MCF 10A (cell line): ENCODE measurements at regions of chr1 and their contacts with region 1.

Region 1: GRCh38 chr1:242467556-242468145 is 56.8 kb downstream of the PLD5 start:
- DNase-seq: peak; percentile 88
- H3K4me3 Mint-ChIP-seq: no peak overlapping the region
- H3K27ac Mint-ChIP-seq: no peak overlapping the region
- H3K4me1 Mint-ChIP-seq: peaks cover 6% of the 10 kb centered on the region
- H3K27me3 Mint-ChIP-seq: no peaks in the 10 kb centered on the region
- CTCF ChIP-seq: peak; percentile 97

Region 2: GRCh38 chr1:242228991-242229390 is 238.7 kb before region 1 on chr1:
- CTCF ChIA-PET with region 1: no interaction called
- POLR2A ChIA-PET with region 1: no interaction called
- intact Hi-C with region 1: no loop called
- DNase-seq: peak; percentile 72
- H3K4me3 Mint-ChIP-seq: no peak overlapping the region
- H3K27ac Mint-ChIP-seq: peak overlapping the region; percentile 36
- H3K4me1 Mint-ChIP-seq: peaks cover 28% of the 10 kb centered on the region
- H3K27me3 Mint-ChIP-seq: no peaks in the 10 kb centered on the region
- CTCF ChIP-seq: no peak

Region 3: DNA sequence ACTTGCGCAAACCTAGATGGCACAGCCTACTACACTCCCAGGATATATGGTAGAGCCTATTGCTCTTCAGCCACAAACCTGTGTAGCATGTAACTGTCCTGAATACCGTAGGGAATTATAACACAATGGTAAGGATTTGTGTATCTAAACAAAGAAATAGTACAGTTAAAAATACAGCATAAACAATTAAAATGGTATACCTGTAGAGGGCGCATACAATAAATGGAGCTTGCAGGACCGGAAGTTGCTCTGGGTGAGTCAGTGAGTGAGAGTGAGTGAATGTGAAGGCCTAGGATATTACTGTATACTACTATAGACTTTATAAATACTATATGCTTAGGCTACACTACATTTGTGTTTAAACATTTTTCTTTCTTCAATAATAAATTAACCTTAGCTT is 42.4 kb before region 1 on chr1:
- CTCF ChIA-PET with region 1: interaction called, 15 read pairs
- POLR2A ChIA-PET with region 1: no interaction called
- intact Hi-C with region 1: no loop called
- DNase-seq: peak; percentile 80
- H3K4me3 Mint-ChIP-seq: no peak overlapping the region
- H3K27ac Mint-ChIP-seq: no peak overlapping the region
- H3K4me1 Mint-ChIP-seq: peaks cover 17% of the 10 kb centered on the region
- H3K27me3 Mint-ChIP-seq: no peaks in the 10 kb centered on the region
- CTCF ChIP-seq: peak; percentile 40

Region 4: DNA sequence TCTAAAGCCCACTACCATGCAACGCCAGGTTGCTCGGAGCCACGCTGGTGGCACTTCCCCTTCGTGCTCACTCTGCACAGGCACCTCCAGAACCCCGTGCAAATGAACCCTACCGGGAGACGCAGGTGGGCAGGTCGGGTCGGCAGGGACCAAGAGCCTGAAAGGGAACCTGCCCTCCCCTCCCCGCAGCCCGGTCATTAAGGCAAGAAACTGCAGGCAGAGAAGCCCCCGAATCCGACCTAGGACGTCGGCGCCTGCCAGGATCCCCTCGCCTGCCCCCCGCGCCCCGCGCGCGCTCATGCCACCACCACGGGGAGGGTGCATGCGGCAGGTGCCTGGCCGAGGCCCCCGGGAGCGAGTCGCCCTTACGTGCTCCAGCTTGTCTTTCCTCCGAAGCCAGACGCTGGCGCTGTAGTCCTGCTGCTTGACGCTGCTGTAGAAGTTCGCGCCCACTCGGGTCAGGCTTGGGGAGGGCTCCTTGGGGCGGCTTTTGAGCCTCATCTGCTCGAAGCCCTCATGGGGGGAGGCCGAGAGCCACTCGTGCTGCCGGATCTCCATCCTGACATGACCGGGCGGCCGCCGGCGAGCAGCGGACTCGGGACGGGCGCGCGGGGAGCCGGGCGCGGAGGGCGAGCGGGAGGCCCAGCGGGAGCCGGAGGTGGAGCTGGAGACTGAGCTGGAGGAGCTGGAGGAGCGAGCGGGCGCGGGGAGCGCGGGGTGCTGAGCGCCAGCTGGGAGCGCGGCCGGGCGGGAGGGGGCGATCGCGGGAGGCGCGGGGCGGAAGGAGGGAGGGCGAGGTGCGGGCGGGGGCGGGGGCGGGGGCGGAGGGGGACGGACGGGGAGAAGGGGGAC is 56.3 kb after region 1 on chr1:
- CTCF ChIA-PET with region 1: interaction called, 6 read pairs
- POLR2A ChIA-PET with region 1: no interaction called
- intact Hi-C with region 1: loop called (anchors 2 kb)
- DNase-seq: peak; percentile 74
- H3K4me3 Mint-ChIP-seq: peak overlapping the region; percentile 79
- H3K27ac Mint-ChIP-seq: no peak overlapping the region
- H3K4me1 Mint-ChIP-seq: peaks cover 26% of the 10 kb centered on the region
- H3K27me3 Mint-ChIP-seq: no peaks in the 10 kb centered on the region
- CTCF ChIP-seq: peak; percentile 41

Region 5: GRCh38 chr1:242641461-242641860 is 173.8 kb after region 1 on chr1:
- CTCF ChIA-PET with region 1: interaction called, 3 read pairs
- POLR2A ChIA-PET with region 1: no interaction called
- intact Hi-C with region 1: loop called (anchors 5 kb)
- DNase-seq: no peak
- H3K4me3 Mint-ChIP-seq: no peak overlapping the region
- H3K27ac Mint-ChIP-seq: no peak overlapping the region
- H3K4me1 Mint-ChIP-seq: no peaks in the 10 kb centered on the region
- H3K27me3 Mint-ChIP-seq: no peaks in the 10 kb centered on the region
- CTCF ChIP-seq: no peak

Region 6: GRCh38 chr1:242770366-242770765 is 302.7 kb after region 1 on chr1:
- CTCF ChIA-PET with region 1: no interaction called
- POLR2A ChIA-PET with region 1: no interaction called
- intact Hi-C with region 1: no loop called
- DNase-seq: peak; percentile 78
- H3K4me3 Mint-ChIP-seq: no peak overlapping the region
- H3K27ac Mint-ChIP-seq: no peak overlapping the region
- H3K4me1 Mint-ChIP-seq: peaks cover 5% of the 10 kb centered on the region
- H3K27me3 Mint-ChIP-seq: no peaks in the 10 kb centered on the region
- CTCF ChIP-seq: no peak

Region 7: DNA sequence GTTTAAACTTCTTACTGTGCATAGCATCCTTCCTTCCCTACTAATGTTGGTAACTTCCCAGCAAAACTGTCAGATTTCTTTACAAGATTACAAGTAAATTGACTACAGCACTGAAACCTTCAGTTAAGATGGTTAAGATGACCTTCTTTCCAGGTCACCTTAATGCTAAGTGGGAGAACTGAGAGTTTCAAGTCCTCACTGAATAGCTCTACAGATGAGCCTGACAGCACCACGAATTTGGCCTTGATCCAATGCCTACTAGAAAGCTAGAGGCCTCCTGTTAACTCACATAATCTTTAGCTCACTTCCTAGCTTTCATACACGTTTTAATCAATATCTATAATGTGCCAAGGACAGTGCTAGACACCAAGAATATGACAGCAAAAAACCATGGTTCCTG is 332.9 kb after region 1 on chr1:
- CTCF ChIA-PET with region 1: interaction called, 16 read pairs
- POLR2A ChIA-PET with region 1: no interaction called
- intact Hi-C with region 1: no loop called
- DNase-seq: no peak
- H3K4me3 Mint-ChIP-seq: no peak overlapping the region
- H3K27ac Mint-ChIP-seq: no peak overlapping the region
- H3K4me1 Mint-ChIP-seq: no peaks in the 10 kb centered on the region
- H3K27me3 Mint-ChIP-seq: no peaks in the 10 kb centered on the region
- CTCF ChIP-seq: no peak